ENCODE measurements at regions of chr3 and their contacts with region 1.

Region 1: GRCh38 chr3:38346587-38347410 is at the start of gene XYLB:
- DNase-seq: peak; percentile 83
- H3K4me3 Mint-ChIP-seq: peak within 1 kb of the TSS; percentile 77
- H3K27ac Mint-ChIP-seq: peak within 1 kb of the TSS; percentile 83
- H3K4me1 Mint-ChIP-seq: peaks cover 10% of the 10 kb centered on the region
- H3K27me3 Mint-ChIP-seq: peaks cover 10% of the 10 kb centered on the region
- total RNA-seq, gene XYLB: 6.9 to 7.0 TPM

Region 2: DNA sequence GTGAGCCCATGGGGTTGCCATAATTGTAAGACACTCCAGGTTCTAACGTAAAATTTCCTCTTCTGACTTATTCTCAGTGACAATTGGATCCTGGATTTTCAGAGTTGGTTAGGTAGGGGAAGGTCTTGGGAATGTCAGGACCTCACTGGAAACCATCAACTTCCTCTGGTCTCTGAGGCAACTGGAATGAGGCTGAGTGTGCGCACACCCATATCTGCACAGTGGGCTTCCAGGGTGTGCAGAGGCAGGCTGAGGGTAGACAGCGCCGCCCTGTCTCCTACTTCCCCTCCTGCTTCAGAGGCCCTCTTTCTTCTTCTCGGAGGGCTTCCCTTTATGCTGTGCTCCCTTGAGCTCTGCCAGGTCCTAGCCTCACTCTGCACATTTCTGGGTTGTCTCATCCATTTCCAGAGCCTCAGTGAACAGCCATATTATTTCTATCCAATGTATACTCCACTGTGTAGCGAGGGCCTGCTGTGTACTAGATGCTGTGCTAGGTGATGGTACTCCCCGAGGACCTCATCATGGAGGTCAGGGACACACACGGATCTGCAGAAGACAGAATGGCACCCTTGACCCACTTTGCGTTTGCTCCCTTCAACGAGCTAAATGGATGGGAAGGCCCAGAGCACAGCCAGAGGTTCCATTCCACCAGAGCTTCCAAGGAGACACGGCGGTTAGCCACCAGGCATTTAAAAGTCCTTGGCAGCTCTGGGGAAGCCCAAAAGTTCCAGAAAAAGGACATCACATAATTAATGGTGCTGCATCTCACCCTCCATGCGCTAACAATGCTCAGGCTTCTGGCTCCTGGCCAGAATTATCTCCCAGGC is 228.2 kb before region 1 on chr3:
- CTCF ChIA-PET with region 1: interaction called, 15 read pairs
- POLR2A ChIA-PET with region 1: no interaction called
- DNase-seq: no peak
- H3K4me3 Mint-ChIP-seq: no peak overlapping the region
- H3K27ac Mint-ChIP-seq: peak overlapping the region; percentile 46
- H3K4me1 Mint-ChIP-seq: peaks cover 8% of the 10 kb centered on the region
- H3K27me3 Mint-ChIP-seq: no peaks in the 10 kb centered on the region

Region 3: GRCh38 chr3:38360345-38360744 is 13.5 kb after region 1 on chr3:
- CTCF ChIA-PET with region 1: interaction called, 13 read pairs
- POLR2A ChIA-PET with region 1: no interaction called
- DNase-seq: no peak
- H3K4me3 Mint-ChIP-seq: no peak overlapping the region
- H3K27ac Mint-ChIP-seq: no peak overlapping the region
- H3K4me1 Mint-ChIP-seq: peaks cover 10% of the 10 kb centered on the region
- H3K27me3 Mint-ChIP-seq: no peaks in the 10 kb centered on the region

Region 4: DNA sequence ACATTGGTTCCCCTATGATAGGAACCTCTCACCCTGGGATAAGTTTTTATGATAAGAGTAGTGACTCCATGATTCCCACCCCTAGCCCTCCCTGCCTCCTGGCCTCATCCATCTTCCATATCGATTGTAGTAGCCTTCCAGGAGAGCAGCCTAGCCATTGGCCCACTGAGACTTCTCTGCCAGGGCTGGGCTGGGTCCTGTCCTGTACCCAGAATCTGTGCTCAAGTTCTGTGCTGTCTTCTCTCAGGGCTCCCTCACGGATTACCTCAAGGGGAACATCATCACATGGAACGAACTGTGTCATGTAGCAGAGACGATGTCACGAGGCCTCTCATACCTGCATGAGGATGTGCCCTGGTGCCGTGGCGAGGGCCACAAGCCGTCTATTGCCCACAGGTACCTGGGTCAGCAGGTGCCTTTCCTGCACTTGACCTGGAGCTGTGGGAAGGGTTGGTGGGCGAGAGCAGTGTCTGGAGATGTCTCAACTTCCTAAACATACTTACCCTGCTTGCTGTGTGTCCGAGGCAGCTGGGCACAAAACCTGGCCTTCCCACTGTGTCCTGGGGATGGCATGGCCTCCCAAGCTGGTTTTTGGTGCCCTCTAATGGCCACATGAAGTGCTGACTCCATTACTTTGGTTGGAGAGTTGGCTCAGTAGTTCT is 132.8 kb after region 1 on chr3:
- CTCF ChIA-PET with region 1: interaction called, 28 read pairs
- POLR2A ChIA-PET with region 1: no interaction called
- DNase-seq: peak; percentile 63
- H3K4me3 Mint-ChIP-seq: no peak overlapping the region
- H3K27ac Mint-ChIP-seq: peak overlapping the region; percentile 68
- H3K4me1 Mint-ChIP-seq: no peaks in the 10 kb centered on the region
- H3K27me3 Mint-ChIP-seq: no peaks in the 10 kb centered on the region